H1 (cell line): ENCODE measurements at regions of chr11 and their contacts with region 1.

Region 1: GRCh38 chr11:134385773-134386565 is 26.1 kb downstream of the B3GAT1 start:
- DNase-seq: no peak
- H3K4me3 ChIP-seq: no peak overlapping the region
- H3K27ac ChIP-seq: no peak overlapping the region
- H3K4me1 ChIP-seq: peaks cover 0 to 3% (median 0%) of the 10 kb centered on the region in 4 experiments; a peak in 1 of 7 replicates
- H3K27me3 ChIP-seq: no peaks in the 10 kb centered on the region
- CTCF ChIP-seq: no peak
- EP300 ChIP-seq: no peak
- POLR2A ChIP-seq: no peak
- RAD21 ChIP-seq: no peak

Region 2: DNA sequence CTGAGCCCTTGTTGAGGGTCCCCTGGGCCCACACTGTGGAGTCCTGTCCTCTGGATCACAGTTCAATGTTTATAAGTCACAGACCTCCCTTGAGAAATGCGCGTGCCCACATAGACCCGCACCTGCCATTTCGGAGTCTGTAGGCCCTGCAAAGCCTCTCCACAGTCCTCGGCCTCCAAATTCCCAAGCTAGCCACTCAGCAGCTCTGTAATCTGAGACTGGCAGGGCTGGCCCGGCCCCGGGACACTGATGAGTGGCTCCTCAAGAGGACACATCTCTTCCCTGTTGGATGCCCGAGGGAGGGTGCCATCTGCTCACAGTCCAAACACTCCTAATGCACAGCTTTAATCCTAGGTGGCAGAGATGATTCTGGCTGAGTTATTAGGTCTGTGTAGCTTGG is 13.0 kb before region 1 on chr11:
- CTCF ChIA-PET with region 1: interaction called, 17 read pairs
- POLR2A ChIA-PET with region 1: interaction called, 12 read pairs
- DNase-seq: no peak
- H3K4me3 ChIP-seq: no peak overlapping the region
- H3K27ac ChIP-seq: no peak overlapping the region
- H3K4me1 ChIP-seq: peaks cover 2 to 18% (median 4%) of the 10 kb centered on the region in 4 experiments; a peak in 3 of 7 replicates
- H3K27me3 ChIP-seq: no peaks in the 10 kb centered on the region
- CTCF ChIP-seq: no peak
- EP300 ChIP-seq: no peak
- POLR2A ChIP-seq: no peak
- RAD21 ChIP-seq: no peak